ENCODE measurements at regions of chr2 and their contacts with region 1.

Region 1: GRCh38 chr2:205680067-205680466 is 2.2 kb upstream of the NRP2 start:
- DNase-seq: no peak
- H3K4me3 ChIP-seq: no peak overlapping the region
- CTCF ChIP-seq: peak; percentile 51

Region 2: GRCh38 chr2:204260162-204260877 is 1419.7 kb before region 1 on chr2:
- CTCF ChIA-PET with region 1: interaction called, 28 read pairs
- POLR2A ChIA-PET with region 1: no interaction called
- DNase-seq: peak; percentile 21
- H3K4me3 ChIP-seq: no peak overlapping the region
- CTCF ChIP-seq: peak; percentile 59

Region 3: DNA sequence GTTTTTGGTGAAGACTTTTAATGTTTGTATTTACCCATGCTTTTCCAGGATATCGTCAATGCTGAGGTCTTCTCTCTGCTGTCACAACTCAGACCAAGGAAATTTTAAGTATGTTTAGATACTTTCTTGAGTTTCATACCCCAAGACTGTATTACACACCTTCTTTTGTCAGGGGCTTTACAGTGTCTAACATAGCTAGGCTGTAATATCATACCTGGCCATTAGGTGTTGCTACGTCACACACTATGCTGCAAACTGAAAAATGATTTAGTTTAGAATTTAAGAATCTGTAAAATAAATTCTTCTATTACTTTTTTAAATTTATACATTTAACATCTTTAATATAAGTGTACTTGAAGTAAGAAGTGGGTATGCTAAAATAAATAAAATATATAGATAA is 356.1 kb before region 1 on chr2:
- CTCF ChIA-PET with region 1: interaction called, 52 read pairs
- POLR2A ChIA-PET with region 1: no interaction called
- DNase-seq: no peak
- H3K4me3 ChIP-seq: no peak overlapping the region
- CTCF ChIP-seq: no peak

Region 4: GRCh38 chr2:205660521-205661124 is 19.4 kb before region 1 on chr2:
- CTCF ChIA-PET with region 1: interaction called, 30 read pairs
- POLR2A ChIA-PET with region 1: interaction called, 4 read pairs
- DNase-seq: peak; percentile 95
- H3K4me3 ChIP-seq: peak overlapping the region; percentile 15
- CTCF ChIP-seq: no peak

Region 5: GRCh38 chr2:205706769-205707381 is 26.8 kb after region 1 on chr2:
- CTCF ChIA-PET with region 1: interaction called, 5 read pairs
- POLR2A ChIA-PET with region 1: interaction called, 46 read pairs
- DNase-seq: peak; percentile 83
- H3K4me3 ChIP-seq: no peak overlapping the region; the same call in 1 of the 2 replicates
- CTCF ChIP-seq: no peak

Region 6: GRCh38 chr2:205885492-205886099 is 205.5 kb after region 1 on chr2:
- CTCF ChIA-PET with region 1: interaction called, 14 read pairs
- POLR2A ChIA-PET with region 1: no interaction called
- DNase-seq: no peak
- H3K4me3 ChIP-seq: no peak overlapping the region
- CTCF ChIP-seq: peak; percentile 91

Region 7: GRCh38 chr2:206805887-206806607 is 1126.0 kb after region 1 on chr2:
- CTCF ChIA-PET with region 1: no interaction called
- POLR2A ChIA-PET with region 1: no interaction called
- DNase-seq: peak; percentile 10
- H3K4me3 ChIP-seq: no peak overlapping the region
- CTCF ChIP-seq: no peak

Measured in AG04449 (cell line).